ENCODE measurements at regions of chr5 and their contacts with region 1.

Region 1: GRCh38 chr5:134176511-134177368 is at the start of gene SKP1:
- DNase-seq: peak; percentile 86
- ATAC-seq: peak; percentile 87
- H3K4me3 Mint-ChIP-seq: peak within 1 kb of the TSS; percentile 82
- H3K27ac Mint-ChIP-seq: peak within 1 kb of the TSS; percentile 94
- H3K4me1 Mint-ChIP-seq: peaks cover 26% of the 10 kb centered on the region
- H3K27me3 Mint-ChIP-seq: no peaks in the 10 kb centered on the region
- CTCF ChIP-seq: no peak
- total RNA-seq, gene SKP1: 235 to 242 TPM

Region 2: GRCh38 chr5:134113902-134114875 is 62.6 kb before region 1 on chr5 and contains the start of gene TCF7:
- CTCF ChIA-PET with region 1: no interaction called
- POLR2A ChIA-PET with region 1: interaction called, 17 read pairs
- intact Hi-C with region 1: no loop called
- DNase-seq: peak; percentile 79
- ATAC-seq: peak; percentile 53
- H3K4me3 Mint-ChIP-seq: peak within 1 kb of the TSS; percentile 73
- H3K27ac Mint-ChIP-seq: peak within 1 kb of the TSS; percentile 84
- H3K4me1 Mint-ChIP-seq: peaks cover 66% of the 10 kb centered on the region
- H3K27me3 Mint-ChIP-seq: no peaks in the 10 kb centered on the region
- CTCF ChIP-seq: no peak
- total RNA-seq, gene TCF7: 47.4 to 50.3 TPM

Region 3: GRCh38 chr5:134145779-134146581 is 30.8 kb before region 1 on chr5:
- CTCF ChIA-PET with region 1: interaction called, 4 read pairs
- POLR2A ChIA-PET with region 1: interaction called, 42 read pairs
- intact Hi-C with region 1: no loop called
- DNase-seq: peak; percentile 91
- ATAC-seq: peak; percentile 88
- H3K4me3 Mint-ChIP-seq: no peak overlapping the region
- H3K27ac Mint-ChIP-seq: peak overlapping the region; percentile 70
- H3K4me1 Mint-ChIP-seq: peaks cover 51% of the 10 kb centered on the region
- H3K27me3 Mint-ChIP-seq: no peaks in the 10 kb centered on the region
- CTCF ChIP-seq: peak; percentile 95

Region 4: GRCh38 chr5:134161513-134162395 is 15.0 kb before region 1 on chr5:
- CTCF ChIA-PET with region 1: interaction called, 3 read pairs
- POLR2A ChIA-PET with region 1: interaction called, 43 read pairs
- intact Hi-C with region 1: no loop called
- DNase-seq: no peak
- ATAC-seq: peak; percentile 42
- H3K4me3 Mint-ChIP-seq: no peak overlapping the region
- H3K27ac Mint-ChIP-seq: peak overlapping the region; percentile 69
- H3K4me1 Mint-ChIP-seq: peaks cover 39% of the 10 kb centered on the region
- H3K27me3 Mint-ChIP-seq: no peaks in the 10 kb centered on the region
- CTCF ChIP-seq: no peak

Region 5: DNA sequence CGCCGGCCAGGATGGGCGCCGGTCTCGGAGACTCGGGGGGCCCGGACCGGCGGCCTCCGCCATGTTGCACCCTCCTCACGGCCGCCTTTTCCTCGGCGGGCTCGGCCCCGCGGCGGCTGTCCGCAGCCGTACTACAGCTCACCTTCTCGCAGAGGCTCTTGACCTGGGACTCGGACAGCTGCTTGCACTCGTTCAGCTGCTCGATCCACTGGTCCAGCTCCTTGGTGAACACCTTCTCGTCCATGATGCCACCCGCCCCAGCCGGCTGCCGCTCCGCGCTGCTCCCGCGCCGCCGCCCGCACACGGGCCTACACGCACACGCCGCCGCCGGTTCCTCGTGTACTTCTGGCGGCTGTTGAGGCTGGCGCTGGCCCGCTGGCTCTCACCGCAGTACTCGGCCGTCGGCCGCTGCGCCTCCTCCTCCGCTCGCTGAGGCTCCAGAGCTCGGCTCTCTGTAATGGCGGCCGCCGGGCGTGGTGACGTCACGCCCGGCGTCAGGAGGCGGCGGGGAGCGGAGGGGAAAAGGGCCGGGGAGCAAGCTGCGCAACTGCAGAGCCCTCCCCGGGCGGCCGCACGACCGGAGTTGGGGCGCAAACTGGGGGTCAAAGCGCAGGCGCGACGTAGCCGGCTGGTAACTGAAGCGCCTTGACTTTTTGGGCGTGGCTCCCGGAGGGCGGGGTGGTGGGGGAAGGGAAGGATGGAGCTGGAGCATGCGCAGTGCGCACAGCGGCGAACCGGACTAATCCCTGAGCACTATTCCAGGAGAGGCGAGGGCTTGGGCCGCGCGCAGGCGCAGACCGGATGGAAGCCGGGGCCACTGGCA is 49.1 kb after region 1 on chr5 and contains the start of gene PPP2CA:
- CTCF ChIA-PET with region 1: interaction called, 3 read pairs
- POLR2A ChIA-PET with region 1: interaction called, 28 read pairs
- intact Hi-C with region 1: no loop called
- DNase-seq: peak; percentile 98
- ATAC-seq: peak; percentile 90
- H3K4me3 Mint-ChIP-seq: peak within 1 kb of the TSS; percentile 98
- H3K27ac Mint-ChIP-seq: peak within 1 kb of the TSS; percentile 99
- H3K4me1 Mint-ChIP-seq: peaks cover 34% of the 10 kb centered on the region
- H3K27me3 Mint-ChIP-seq: no peaks in the 10 kb centered on the region
- CTCF ChIP-seq: no peak
- total RNA-seq, gene PPP2CA: 147 to 153 TPM

Measured in activated CD8-positive, alpha-beta T cell treated with anti-CD3 and anti-CD28 coated beads for 36 hours (primary cell).